ENCODE measurements at regions of chr6 and their contacts with region 1.

Region 1: DNA sequence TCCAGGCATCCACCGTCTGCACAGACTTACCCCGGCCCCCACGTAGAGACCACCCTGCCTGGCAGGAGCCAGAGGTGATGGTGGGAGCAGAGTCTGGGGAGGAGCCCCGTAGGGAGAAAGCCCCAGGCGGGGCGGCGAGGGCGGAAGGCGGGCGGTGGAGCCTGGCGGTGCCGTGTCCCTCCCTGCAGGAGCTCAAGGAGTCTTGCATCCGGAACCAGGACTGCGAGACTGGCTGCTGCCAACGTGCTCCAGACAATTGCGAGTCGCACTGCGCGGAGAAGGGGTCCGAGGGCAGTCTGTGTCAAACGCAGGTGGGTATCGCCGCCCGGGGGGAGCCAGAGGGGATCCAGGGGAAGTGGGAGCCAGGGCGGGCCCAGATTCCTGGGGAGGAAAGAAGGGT is 6.0 kb downstream of the CLPSL1 start:
- DNase-seq: no peak
- H3K4me3 ChIP-seq: no peak overlapping the region
- H3K4me3 Mint-ChIP-seq: peak overlapping the region in 1 of 2 donors; percentile 62
- H3K27ac ChIP-seq: no peak overlapping the region
- H3K27ac Mint-ChIP-seq: no peak overlapping the region
- H3K4me1 ChIP-seq: no peaks in the 10 kb centered on the region
- H3K4me1 Mint-ChIP-seq: peaks cover 3% of the 10 kb centered on the region
- H3K27me3 ChIP-seq: peaks cover 17 to 39% of the 10 kb centered on the region in 2 donors
- H3K27me3 Mint-ChIP-seq: peaks cover 41 to 66% (median 54%) of the 10 kb centered on the region in 3 donors
- CTCF ChIP-seq: no peak

Region 2: DNA sequence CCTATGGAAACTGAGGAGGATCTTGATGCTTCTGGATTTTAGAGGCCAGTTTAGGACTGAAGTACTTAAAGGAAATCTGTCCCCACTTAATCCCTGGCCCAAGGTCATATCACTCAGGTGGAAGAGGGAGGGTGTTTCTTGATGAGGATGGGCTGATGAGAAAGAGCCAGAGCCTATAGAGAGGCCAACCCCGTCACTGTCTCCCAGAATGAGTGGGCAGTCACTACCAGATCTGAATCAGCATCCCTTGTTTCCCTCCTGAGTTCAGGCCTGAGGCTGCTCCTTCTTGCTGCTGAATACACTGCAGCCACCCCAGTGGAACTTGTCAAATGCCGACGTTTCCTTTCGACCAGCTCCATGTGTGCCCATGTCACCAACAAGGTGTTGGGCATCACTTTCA is 35.2 kb before region 1 on chr6:
- intact Hi-C with region 1: no loop called
- DNase-seq: no peak
- H3K4me3 ChIP-seq: no peak overlapping the region
- H3K4me3 Mint-ChIP-seq: no peak overlapping the region
- H3K27ac ChIP-seq: no peak overlapping the region
- H3K27ac Mint-ChIP-seq: peak overlapping the region in 1 of 7 donors; percentile 43
- H3K4me1 ChIP-seq: peaks cover 0 to 5% of the 10 kb centered on the region in 2 donors
- H3K4me1 Mint-ChIP-seq: peaks cover 4% of the 10 kb centered on the region
- H3K27me3 ChIP-seq: no peaks in the 10 kb centered on the region
- H3K27me3 Mint-ChIP-seq: peaks cover 0 to 3% (median 2%) of the 10 kb centered on the region in 3 donors
- CTCF ChIP-seq: no peak

Region 3: GRCh38 chr6:35797837-35798526 is 11.2 kb after region 1 on chr6:
- intact Hi-C with region 1: loop called in 1 of 2 experiments (anchors 1 kb)
- DNase-seq: no peak
- H3K4me3 ChIP-seq: no peak overlapping the region
- H3K4me3 Mint-ChIP-seq: no peak overlapping the region
- H3K27ac ChIP-seq: no peak overlapping the region
- H3K27ac Mint-ChIP-seq: no peak overlapping the region
- H3K4me1 ChIP-seq: no peaks in the 10 kb centered on the region
- H3K4me1 Mint-ChIP-seq: no peaks in the 10 kb centered on the region
- H3K27me3 ChIP-seq: no peaks in the 10 kb centered on the region
- H3K27me3 Mint-ChIP-seq: peaks cover 9 to 14% (median 11%) of the 10 kb centered on the region in 3 donors
- CTCF ChIP-seq: no peak

Measured in CD14-positive monocyte (primary cell).